ENCODE measurements at regions of chr15 and their contacts with region 1.

Region 1: DNA sequence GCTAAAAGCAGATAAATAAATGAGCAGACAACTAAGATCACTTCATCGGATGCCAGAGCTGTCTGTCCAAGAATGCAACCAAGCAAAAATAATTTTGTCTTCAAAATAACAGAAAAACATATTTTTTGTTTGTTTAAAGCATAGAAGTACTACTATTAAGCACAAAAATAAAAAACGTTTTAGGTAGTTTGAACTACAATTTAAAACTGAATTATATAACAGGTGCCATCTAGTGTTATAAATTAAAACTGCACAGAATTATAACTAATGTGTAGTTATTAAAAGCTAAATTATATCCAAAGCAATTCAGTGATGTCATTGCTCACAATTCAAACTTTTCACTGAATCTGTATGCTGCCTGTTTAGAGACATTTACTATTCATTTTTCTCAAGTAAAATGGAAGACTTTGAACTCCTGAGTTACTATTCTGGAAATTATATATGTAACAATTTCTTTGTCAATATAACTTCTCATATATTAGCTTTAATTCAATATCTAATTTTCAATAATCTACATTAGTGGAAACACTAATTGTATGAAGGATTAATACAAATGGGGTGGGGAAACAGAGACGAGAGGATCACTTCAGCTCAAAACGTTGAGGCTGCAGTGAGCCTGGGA is 29.5 kb downstream of the LINS1 start:
- DNase-seq: no peak
- ATAC-seq: peak in 1 of 2 donors; percentile 36
- H3K4me3 ChIP-seq: no peak overlapping the region
- H3K27ac ChIP-seq: no peak overlapping the region
- H3K4me1 ChIP-seq: peaks cover 0 to 9% of the 10 kb centered on the region in 2 donors
- H3K27me3 ChIP-seq: no peaks in the 10 kb centered on the region
- CTCF ChIP-seq: peak; percentile 51 to 69 (median 61)
- POLR2A ChIP-seq: no peak

Region 2: DNA sequence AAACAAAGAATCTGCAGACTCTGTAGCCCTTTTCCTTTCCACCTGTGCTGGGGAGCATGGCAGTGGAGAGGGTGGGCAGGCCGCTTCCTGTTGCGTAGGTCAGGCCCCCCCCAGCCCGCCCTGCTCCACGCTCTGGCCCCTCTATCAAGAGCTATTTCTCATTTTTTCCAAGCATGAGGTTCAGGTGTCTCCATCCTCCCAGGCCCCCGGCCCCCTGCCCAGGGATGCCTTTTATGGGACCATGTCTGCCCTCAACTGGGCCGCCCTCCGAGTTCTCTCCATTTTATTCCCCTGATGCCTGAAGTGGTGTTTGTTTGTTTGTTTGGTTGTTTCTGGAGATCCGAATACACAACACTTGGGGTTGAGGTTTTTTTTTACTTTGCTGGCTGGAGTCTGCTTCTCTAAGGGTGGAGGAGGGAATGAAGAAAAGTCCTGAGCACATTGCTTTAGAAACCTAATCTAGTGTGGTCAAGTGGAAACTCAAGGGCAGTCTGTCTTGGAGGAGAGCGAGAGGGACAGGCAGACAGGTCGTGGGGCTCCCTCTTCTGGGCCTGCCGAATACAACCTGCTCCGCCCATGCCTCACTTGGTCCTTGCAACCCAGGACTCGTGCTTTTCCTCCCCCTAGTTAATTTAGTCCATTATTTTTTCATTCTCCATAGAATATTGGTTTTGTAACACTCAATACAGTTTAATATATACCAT is 662.7 kb before region 1 on chr15:
- in situ Hi-C with region 1: loop called in 1 of 4 experiments (anchors 25 kb)
- intact Hi-C with region 1: no loop called
- DNase-seq: no peak
- ATAC-seq: no peak
- H3K4me3 ChIP-seq: no peak overlapping the region
- H3K27ac ChIP-seq: no peak overlapping the region
- H3K4me1 ChIP-seq: no peaks in the 10 kb centered on the region
- H3K27me3 ChIP-seq: no peaks in the 10 kb centered on the region
- CTCF ChIP-seq: no peak
- POLR2A ChIP-seq: no peak

Region 3: DNA sequence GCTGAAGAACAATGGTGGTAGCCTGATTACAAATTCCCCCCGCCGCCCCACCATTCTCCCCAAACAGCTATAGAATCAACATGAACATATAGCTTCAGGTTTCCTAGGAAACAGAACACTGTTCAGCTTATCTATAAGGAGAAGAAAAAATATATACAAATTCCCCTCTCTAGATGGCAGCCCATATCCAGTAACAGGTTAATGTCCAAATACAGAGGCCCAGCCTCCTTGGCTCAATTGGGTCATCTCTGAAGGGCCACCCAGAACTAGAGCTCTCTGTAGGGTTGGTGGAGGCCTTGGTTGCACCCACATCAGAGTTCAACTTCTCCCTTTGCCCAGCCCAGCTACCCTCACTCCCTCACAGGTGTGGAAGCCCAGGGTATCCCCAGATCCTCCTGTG is 139.2 kb before region 1 on chr15:
- in situ Hi-C with region 1: loop called in 1 of 4 experiments (anchors 25 kb)
- intact Hi-C with region 1: loop called (anchors 5 kb)
- DNase-seq: no peak
- ATAC-seq: no peak
- H3K4me3 ChIP-seq: no peak overlapping the region
- H3K27ac ChIP-seq: no peak overlapping the region
- H3K4me1 ChIP-seq: peaks cover 12 to 16% of the 10 kb centered on the region in 2 donors
- H3K27me3 ChIP-seq: no peaks in the 10 kb centered on the region
- CTCF ChIP-seq: no peak
- POLR2A ChIP-seq: no peak

Region 4: GRCh38 chr15:100438570-100438969 is 133.9 kb before region 1 on chr15:
- in situ Hi-C with region 1: loop called in 1 of 4 experiments (anchors 25 kb)
- intact Hi-C with region 1: loop called (anchors 5 kb)
- DNase-seq: peak; percentile 18 to 26
- ATAC-seq: no peak
- H3K4me3 ChIP-seq: no peak overlapping the region
- H3K27ac ChIP-seq: no peak overlapping the region
- H3K4me1 ChIP-seq: peaks cover 3 to 6% of the 10 kb centered on the region in 2 donors
- H3K27me3 ChIP-seq: no peaks in the 10 kb centered on the region
- CTCF ChIP-seq: no peak
- POLR2A ChIP-seq: no peak

Region 5: DNA sequence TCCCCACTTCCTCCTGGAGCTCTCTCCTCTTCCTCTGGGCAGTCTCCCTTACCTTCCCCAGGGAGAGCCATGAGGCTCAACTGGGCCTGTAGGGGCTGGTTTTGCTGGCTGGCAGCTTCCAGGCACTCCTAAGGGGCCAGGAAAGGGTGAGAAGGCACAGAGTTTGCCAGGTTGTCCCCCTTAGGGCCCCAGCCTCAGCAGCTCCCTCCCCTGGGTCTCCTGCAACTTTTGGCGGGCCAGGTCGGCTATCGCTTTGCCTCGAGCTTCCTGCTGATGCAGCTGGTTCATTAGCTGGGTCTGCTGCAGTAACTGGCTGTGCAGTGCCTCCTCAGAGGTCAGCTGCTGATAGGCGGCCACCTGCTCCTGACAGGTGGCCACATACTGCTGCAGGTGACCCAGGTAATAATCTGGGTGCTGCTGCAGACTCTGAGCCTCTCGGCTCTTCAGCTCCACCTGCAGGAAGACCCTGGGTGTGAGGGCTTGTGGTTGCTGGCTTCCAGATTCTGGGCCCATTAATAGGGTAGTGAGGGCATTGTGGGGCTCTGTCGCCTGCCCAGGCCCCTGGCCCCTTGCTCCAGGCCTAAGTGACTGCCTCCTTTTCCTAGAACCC is 1201.1 kb after region 1 on chr15:
- in situ Hi-C with region 1: no loop called
- intact Hi-C with region 1: no loop called
- DNase-seq: no peak
- ATAC-seq: no peak
- H3K4me3 ChIP-seq: no peak overlapping the region
- H3K27ac ChIP-seq: no peak overlapping the region
- H3K4me1 ChIP-seq: no peaks in the 10 kb centered on the region
- H3K27me3 ChIP-seq: no peaks in the 10 kb centered on the region
- CTCF ChIP-seq: no peak
- POLR2A ChIP-seq: no peak

Measured in gastrocnemius medialis (tissue), 4 donors.